PC-9 (cell line): ENCODE measurements at regions of chr12 and their contacts with region 1.

Region 1: GRCh38 chr12:50151047-50151687 is 16.0 kb downstream of the CERS5 start:
- DNase-seq: no peak
- H3K4me3 ChIP-seq: no peak overlapping the region
- H3K27ac ChIP-seq: no peak overlapping the region
- H3K4me1 ChIP-seq: no peaks in the 10 kb centered on the region
- H3K27me3 ChIP-seq: no peaks in the 10 kb centered on the region
- CTCF ChIP-seq: no peak

Region 2: DNA sequence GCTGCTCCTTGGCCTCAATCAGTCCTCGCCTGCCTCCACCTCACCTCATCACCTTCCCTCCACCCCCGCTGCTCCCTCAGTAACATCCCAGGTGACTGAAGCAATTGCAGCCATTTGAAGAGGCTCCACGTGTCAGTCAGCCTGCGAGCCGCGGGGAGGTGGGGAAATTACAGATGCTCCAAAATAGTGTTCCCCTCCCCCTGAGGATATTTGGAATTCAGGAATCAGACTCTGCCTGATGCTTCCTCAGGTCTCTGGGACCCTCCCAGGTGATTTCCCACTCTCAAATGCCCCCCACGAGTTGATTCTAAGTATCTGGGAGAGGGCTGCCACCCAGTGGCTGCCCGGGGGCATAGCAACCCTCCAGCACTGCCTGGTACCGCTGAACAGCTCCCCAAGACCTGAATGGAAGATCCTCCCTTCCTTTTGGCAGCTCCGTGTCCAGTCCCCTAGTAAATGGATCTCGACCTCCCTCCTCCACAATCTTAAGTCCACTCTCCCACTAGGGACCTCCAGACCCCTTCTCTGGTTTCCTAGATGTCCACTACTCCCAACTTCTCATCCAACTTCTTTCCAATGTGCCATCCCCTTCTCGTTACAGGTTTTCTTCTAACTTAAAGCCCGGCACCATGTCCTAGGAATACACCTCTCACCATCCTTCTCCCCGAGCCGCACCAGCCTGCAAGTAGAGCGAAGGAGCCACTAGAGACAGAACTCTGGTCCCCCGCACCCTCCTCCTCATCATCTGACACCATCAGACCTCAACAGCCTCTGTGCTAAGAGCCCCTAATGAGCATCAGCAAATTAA is 95.1 kb before region 1 on chr12:
- CTCF ChIA-PET with region 1: no interaction called
- POLR2A ChIA-PET with region 1: no interaction called
- intact Hi-C with region 1: no loop called
- DNase-seq: peak in 1 of 2 experiments; percentile 37
- H3K4me3 ChIP-seq: no peak overlapping the region
- H3K27ac ChIP-seq: no peak overlapping the region
- H3K4me1 ChIP-seq: peaks cover 5% of the 10 kb centered on the region
- H3K27me3 ChIP-seq: peaks cover 23% of the 10 kb centered on the region
- CTCF ChIP-seq: peak; percentile 93

Region 3: GRCh38 chr12:50129290-50129689 is 21.9 kb before region 1 on chr12:
- CTCF ChIA-PET with region 1: interaction called, 20 read pairs
- POLR2A ChIA-PET with region 1: no interaction called
- intact Hi-C with region 1: no loop called
- DNase-seq: no peak
- H3K4me3 ChIP-seq: no peak overlapping the region
- H3K27ac ChIP-seq: no peak overlapping the region
- H3K4me1 ChIP-seq: no peaks in the 10 kb centered on the region
- H3K27me3 ChIP-seq: no peaks in the 10 kb centered on the region
- CTCF ChIP-seq: no peak

Region 4: DNA sequence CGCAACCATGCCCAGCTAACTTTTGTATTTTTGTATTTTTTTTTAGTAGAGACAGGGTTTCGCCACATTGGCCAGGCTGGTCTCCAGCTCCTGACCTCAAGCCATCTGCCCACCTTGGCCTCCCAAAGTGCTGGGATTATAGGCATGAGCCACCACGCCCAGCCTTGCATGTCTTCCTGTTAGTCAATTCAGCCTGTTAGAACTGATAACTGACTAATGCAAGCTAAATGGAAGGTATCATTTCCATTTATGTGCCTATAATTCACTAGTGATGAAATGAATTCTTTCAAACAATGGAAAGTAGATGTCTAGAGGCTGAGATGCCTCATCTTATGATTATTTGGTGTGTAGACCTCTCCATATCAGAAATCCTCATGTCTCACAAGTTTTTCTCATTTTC is 316.3 kb after region 1 on chr12:
- CTCF ChIA-PET with region 1: interaction called, 15 read pairs
- POLR2A ChIA-PET with region 1: no interaction called
- intact Hi-C with region 1: no loop called
- DNase-seq: no peak
- H3K4me3 ChIP-seq: no peak overlapping the region
- H3K27ac ChIP-seq: no peak overlapping the region
- H3K4me1 ChIP-seq: no peaks in the 10 kb centered on the region
- H3K27me3 ChIP-seq: no peaks in the 10 kb centered on the region
- CTCF ChIP-seq: no peak